PC-3 (cell line): ENCODE measurements at regions of chr9 and their contacts with region 1.

Region 1: GRCh38 chr9:77751341-77752091 is 103.4 kb upstream of the GNA14 start:
- DNase-seq: peak; percentile 75
- ATAC-seq: peak; percentile 82
- H3K4me3 ChIP-seq: no peak overlapping the region
- H3K27ac ChIP-seq: no peak overlapping the region
- H3K4me1 ChIP-seq: peaks cover 7% of the 10 kb centered on the region
- H3K27me3 ChIP-seq: no peaks in the 10 kb centered on the region
- CTCF ChIP-seq: peak; percentile 76

Region 2: DNA sequence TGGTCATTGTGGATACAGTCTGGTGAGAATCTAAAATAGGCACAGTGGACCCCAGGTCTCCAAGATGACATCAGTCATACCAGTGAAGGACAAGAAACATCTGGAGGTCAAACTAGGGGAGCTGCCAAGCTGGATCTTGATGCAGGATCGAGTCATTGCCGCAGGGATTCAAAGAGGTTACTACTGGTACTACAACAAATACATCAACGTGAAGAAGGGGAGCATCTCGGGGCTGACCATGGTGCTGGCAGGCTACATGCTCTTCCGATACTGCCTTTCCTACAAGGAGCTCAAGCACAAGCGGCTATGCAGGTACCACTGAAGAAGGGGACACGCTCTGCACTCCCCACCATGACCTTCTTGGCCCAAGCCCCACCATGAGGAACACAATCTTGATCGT is 711.2 kb before region 1 on chr9:
- CTCF ChIA-PET with region 1: no interaction called
- POLR2A ChIA-PET with region 1: no interaction called
- intact Hi-C with region 1: no loop called
- DNase-seq: no peak
- ATAC-seq: no peak
- H3K4me3 ChIP-seq: no peak overlapping the region
- H3K27ac ChIP-seq: no peak overlapping the region
- H3K4me1 ChIP-seq: no peaks in the 10 kb centered on the region
- H3K27me3 ChIP-seq: peaks cover 5% of the 10 kb centered on the region
- CTCF ChIP-seq: no peak

Region 3: DNA sequence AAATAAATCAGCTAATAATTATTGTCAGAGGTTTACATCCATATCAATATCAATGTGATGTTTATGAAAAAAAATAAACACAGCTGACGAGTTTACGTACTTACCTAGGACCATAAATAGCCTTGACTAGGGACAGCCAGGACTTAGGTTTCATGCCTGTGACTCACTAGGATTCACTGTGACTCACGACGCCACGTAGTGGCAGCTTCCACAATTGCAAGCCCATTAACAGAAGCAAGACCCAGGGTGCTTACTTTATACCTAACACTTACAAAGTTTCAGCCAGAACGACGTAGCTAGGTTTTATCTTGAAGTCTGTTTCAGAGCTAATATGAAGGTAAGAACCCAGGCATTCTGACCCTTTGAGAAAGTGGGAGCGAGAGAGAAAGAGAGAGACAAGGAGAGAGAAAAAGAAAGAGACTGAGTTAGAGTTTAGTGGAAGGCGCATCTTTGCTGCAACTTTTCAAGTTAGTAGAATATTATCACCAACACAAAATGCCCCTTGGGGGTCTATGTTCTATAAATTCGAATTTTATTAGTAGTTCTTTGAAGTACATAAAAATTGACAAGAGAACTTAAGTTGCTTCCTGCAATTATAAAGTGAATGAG is 294.6 kb before region 1 on chr9:
- CTCF ChIA-PET with region 1: interaction called, 5 read pairs
- POLR2A ChIA-PET with region 1: no interaction called
- intact Hi-C with region 1: loop called (anchors 1 kb)
- DNase-seq: peak; percentile 93
- ATAC-seq: peak; percentile 73
- H3K4me3 ChIP-seq: no peak overlapping the region
- H3K27ac ChIP-seq: no peak overlapping the region
- H3K4me1 ChIP-seq: no peaks in the 10 kb centered on the region; the same call in 1 of the 2 replicates
- H3K27me3 ChIP-seq: no peaks in the 10 kb centered on the region
- CTCF ChIP-seq: peak; percentile 74

Region 4: DNA sequence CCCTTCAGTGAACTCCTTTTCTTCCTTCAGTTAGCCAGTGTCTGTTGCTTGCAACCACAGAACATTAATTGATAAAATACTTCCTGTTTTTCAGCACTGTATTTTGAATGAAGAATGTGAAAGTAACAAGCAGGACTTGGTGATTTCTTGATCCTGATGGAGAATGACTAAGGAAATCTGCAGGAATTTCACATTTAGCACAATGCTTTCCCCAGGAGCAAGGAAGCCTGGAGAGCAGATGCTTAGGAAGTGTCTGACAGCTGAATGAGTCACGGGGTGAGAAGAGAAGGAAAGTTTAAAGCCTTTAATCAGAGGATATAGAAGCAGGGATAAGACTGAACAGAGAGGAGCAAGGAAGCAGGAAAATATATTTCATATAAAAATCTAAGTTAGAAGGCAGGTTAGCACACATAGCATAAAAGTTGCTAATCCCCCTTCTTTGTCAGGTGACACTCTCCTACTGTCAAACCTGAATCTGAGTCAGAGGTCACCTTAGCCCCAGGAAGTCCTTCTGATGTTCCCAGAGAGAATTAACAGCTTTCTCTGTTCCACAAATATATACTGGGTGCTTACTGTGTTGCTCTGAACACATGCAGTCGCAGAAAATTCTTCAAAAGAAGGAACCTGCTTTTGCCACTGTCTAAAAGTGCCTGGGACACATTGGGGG is 163.1 kb before region 1 on chr9:
- CTCF ChIA-PET with region 1: interaction called, 3 read pairs
- POLR2A ChIA-PET with region 1: no interaction called
- intact Hi-C with region 1: loop called (anchors 2 kb)
- DNase-seq: peak; percentile 88
- ATAC-seq: peak; percentile 72
- H3K4me3 ChIP-seq: peak overlapping the region; percentile 54
- H3K27ac ChIP-seq: peak overlapping the region; percentile 99
- H3K4me1 ChIP-seq: peaks cover 28% of the 10 kb centered on the region
- H3K27me3 ChIP-seq: no peaks in the 10 kb centered on the region
- CTCF ChIP-seq: no peak

Region 5: DNA sequence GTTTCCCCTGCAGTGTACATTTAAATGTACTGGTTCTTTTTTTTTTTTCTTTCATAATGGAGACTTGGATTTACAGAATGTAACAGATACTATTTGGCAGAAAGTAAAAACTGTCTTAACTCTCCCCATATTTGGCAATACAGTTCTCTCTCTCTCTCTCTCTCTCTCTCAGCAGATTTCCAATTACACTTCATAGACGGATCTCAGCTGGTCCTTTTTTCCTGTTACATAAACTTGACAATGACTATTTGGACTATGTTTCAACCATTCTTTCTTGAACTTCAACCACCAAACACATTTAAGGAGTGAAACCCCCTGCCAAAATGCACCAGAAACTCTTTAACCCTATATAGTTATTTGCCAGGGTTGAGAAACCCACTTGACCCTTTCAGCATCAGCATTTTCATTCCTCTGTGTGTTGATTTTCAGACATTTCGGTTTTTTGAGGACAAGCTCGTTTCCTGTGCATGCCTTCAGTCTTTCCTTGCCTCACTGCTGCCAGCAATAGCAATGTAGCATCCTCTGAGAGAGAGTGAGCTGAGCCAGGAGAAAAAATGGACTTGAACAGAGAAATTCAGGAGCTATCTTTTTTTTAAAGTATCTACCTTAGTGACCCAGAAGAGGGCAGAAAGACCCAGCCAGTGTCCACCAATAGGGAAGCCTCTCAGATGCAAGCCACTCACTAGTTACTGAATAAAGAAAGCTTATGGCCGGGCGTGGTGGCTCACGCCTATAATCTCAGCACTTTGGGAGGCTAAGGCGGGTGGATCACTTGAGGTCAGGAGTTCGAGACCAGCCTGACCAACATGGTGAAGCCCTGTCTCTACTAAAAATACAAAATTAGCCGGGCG is 77.3 kb before region 1 on chr9:
- CTCF ChIA-PET with region 1: interaction called, 11 read pairs
- POLR2A ChIA-PET with region 1: no interaction called
- intact Hi-C with region 1: loop called (anchors 2 kb)
- DNase-seq: no peak
- ATAC-seq: no peak
- H3K4me3 ChIP-seq: no peak overlapping the region
- H3K27ac ChIP-seq: no peak overlapping the region
- H3K4me1 ChIP-seq: no peaks in the 10 kb centered on the region
- H3K27me3 ChIP-seq: no peaks in the 10 kb centered on the region
- CTCF ChIP-seq: no peak

Region 6: DNA sequence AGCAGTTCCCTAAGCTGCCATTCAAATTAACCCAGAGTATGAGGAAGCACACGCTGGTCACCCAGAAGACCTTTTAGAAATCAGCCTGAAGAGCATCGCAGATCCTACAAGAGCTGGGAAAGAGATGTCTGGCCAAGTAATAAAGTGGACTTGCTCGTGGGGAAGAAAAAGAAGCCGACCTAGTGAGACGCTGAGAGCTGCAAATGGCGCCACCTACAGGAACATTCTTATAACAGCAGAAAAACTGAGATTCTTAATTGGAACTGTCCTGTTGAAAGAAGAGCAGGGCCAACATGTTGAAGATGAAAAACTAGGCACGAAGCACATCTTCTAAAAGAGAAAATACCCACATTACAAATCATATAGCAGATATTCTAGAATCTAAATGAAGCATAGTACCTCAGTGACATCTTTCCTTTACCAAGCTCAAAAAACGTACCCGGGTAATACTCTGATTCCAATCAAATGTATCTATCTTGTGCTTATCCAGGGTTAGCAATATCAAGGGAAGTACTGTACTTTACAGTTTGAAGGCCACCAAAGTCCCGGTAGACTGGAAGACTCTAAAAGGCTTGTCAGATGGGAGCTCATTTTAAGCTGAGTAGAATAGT is 284.0 kb after region 1 on chr9:
- CTCF ChIA-PET with region 1: no interaction called
- POLR2A ChIA-PET with region 1: no interaction called
- intact Hi-C with region 1: no loop called
- DNase-seq: peak; percentile 74
- ATAC-seq: peak; percentile 7; the same call in 1 of the 2 replicates
- H3K4me3 ChIP-seq: peak overlapping the region; percentile 35; the same call in 1 of the 2 replicates
- H3K27ac ChIP-seq: no peak overlapping the region
- H3K4me1 ChIP-seq: peaks cover 9% of the 10 kb centered on the region; the same call in 1 of the 2 replicates
- H3K27me3 ChIP-seq: no peaks in the 10 kb centered on the region
- CTCF ChIP-seq: peak; percentile 78